ENCODE measurements at regions of chr12 and their contacts with region 1.

Region 1: GRCh38 chr12:50025187-50026059 is at the start of gene RACGAP1:
- DNase-seq: peak; percentile 94 to 95
- H3K4me3 ChIP-seq: peak within 1 kb of the TSS; percentile 76
- H3K27ac ChIP-seq: no peak within 1 kb of the TSS
- H3K4me1 ChIP-seq: peaks cover 8% of the 10 kb centered on the region
- H3K27me3 ChIP-seq: no peaks in the 10 kb centered on the region
- CTCF ChIP-seq: no peak
- total RNA-seq, gene RACGAP1: 108 and 112 TPM in 2 replicates

Region 2: GRCh38 chr12:49932533-49933130 is 92.8 kb before region 1 on chr12:
- CTCF ChIA-PET with region 1: no interaction called
- POLR2A ChIA-PET with region 1: interaction called, 13 read pairs
- intact Hi-C with region 1: no loop called
- DNase-seq: no peak
- H3K4me3 ChIP-seq: no peak overlapping the region
- H3K27ac ChIP-seq: no peak overlapping the region
- H3K4me1 ChIP-seq: peaks cover 11% of the 10 kb centered on the region
- H3K27me3 ChIP-seq: no peaks in the 10 kb centered on the region
- CTCF ChIP-seq: no peak

Region 3: DNA sequence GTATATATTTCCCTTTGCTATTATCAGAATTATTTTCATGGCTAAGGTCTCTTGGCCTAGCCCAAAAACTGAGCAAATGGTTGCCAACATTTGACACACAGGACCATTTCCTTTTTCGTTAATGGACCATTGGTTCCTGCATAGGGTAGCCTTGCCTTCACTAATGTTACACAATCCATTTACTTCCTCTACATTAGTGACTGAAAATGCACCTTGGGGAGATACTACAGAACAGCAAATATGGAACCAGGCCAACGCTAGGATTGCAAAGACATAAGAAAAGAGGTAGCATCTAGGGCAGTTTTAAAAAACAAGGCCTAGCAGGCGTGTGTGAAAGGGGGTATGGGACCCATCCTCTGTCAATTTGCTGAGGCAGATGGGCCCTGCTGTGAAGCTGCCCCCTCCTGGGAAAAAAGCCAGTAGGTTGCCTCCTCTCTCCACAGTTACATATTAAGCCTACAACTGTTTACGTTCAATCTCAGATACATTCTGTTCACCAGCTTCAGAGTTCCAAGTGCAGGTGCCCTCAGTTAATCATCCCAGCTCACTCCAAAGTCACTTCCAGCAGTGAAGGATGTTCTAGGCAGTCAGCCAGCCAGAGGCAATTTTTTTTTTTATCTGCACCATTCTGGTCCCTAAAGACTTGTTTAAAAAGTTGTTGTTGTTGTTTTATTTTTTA is 37.7 kb before region 1 on chr12:
- CTCF ChIA-PET with region 1: no interaction called
- POLR2A ChIA-PET with region 1: no interaction called
- intact Hi-C with region 1: loop called (anchors 5 kb)
- DNase-seq: no peak
- H3K4me3 ChIP-seq: no peak overlapping the region
- H3K27ac ChIP-seq: no peak overlapping the region
- H3K4me1 ChIP-seq: no peaks in the 10 kb centered on the region
- H3K27me3 ChIP-seq: no peaks in the 10 kb centered on the region
- CTCF ChIP-seq: no peak

Region 4: DNA sequence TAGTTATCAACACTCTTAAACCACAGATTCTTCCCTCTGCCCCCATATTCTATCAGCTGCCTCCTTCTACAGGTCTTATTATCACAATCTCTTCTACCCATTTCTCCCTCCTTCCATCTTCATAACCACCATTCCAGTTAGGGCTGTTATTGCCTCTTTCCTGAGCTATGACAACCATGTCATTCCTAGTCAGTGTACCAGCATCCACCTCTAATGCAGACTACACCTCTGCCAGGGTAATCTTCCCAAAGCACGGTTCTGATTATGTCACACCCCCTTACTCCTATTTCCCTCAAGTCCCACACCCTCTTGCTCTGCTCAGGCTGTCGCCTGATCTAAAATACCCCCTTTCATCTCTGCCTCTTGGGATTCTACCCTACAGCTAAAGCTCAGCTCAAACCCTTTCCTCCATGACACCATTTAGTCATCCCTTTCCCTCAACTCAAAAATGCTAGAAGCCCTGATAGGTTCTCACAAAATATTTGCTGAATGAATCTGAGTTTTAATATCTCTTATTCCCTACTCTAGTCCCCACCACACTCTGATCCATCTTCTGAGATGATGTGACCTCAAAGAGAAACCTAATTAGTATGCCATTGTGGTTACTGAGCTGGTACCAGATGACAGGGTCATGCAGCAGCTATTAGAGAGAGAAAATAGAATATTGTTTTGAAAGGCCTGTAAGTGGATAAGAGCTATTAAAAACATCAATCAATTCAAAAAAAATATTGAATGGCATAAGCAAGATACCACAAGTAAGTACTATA is 11.9 kb before region 1 on chr12:
- CTCF ChIA-PET with region 1: no interaction called
- POLR2A ChIA-PET with region 1: interaction called, 12 read pairs
- intact Hi-C with region 1: no loop called
- DNase-seq: no peak
- H3K4me3 ChIP-seq: no peak overlapping the region
- H3K27ac ChIP-seq: no peak overlapping the region
- H3K4me1 ChIP-seq: no peaks in the 10 kb centered on the region
- H3K27me3 ChIP-seq: no peaks in the 10 kb centered on the region
- CTCF ChIP-seq: no peak

Measured in PC-9 (cell line).